Naive thymus-derived CD4-positive, alpha-beta T cell (primary cell): ENCODE measurements at regions of chr1 and their contacts with region 1.

Region 1: DNA sequence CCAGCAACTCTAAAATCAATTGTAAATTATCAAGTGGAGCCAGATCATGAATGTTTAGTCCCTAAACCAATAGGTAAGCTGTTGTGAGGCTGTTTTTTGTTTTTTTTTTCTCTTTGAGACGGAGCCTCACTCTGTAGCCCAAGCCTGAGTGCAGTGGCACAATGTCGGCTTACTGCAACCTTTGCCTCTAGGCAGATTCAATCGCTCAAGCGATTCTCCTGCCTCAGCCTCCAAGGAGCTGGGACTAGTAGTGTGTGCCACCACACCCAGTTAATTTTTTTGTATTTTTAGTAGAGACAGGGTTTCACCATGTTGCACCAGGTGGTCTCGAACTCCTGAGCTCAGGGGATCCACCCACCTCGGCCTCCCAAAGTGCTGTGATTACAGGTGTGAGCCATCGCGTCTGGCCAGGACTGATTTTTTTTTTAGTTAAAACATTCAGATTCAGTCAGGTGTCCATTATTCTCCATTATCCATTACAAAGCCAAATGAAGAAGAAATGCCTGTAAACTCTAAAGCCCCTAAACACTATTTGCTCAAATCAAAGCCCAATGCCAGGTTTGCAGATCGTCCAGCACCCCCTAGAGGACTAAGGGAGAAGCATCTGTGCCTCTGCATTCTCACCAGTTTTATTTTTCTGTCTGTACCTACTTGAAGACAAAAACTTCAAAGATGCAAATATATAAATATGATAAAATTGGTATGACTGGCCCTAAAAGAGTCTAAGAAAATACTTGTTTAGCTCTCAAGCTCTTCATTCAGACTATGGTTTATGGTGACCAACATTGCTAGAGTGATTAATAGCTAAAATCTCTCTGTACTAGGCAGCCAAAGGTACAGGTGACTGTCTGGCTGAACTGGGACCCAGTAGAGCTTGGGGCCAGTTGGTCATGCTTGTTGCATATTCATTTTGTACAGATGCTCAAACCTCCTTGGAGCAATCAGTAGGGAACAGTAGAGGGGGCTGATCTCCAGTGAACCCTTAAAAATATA is 138.6 kb downstream of the SYT2 start:
- DNase-seq: peak in 5 of 9 donors; percentile 3 to 12 (median 5)
- ATAC-seq: no peak
- H3K4me3 ChIP-seq: no peak overlapping the region
- H3K4me3 Mint-ChIP-seq: no peak overlapping the region
- H3K27ac ChIP-seq: no peak overlapping the region
- H3K27ac Mint-ChIP-seq: no peak overlapping the region
- H3K4me1 ChIP-seq: no peaks in the 10 kb centered on the region
- H3K4me1 Mint-ChIP-seq: peaks cover 0 to 6% (median 0%) of the 10 kb centered on the region in 7 donors
- H3K27me3 ChIP-seq: no peaks in the 10 kb centered on the region
- H3K27me3 Mint-ChIP-seq: no peaks in the 10 kb centered on the region

Region 2: DNA sequence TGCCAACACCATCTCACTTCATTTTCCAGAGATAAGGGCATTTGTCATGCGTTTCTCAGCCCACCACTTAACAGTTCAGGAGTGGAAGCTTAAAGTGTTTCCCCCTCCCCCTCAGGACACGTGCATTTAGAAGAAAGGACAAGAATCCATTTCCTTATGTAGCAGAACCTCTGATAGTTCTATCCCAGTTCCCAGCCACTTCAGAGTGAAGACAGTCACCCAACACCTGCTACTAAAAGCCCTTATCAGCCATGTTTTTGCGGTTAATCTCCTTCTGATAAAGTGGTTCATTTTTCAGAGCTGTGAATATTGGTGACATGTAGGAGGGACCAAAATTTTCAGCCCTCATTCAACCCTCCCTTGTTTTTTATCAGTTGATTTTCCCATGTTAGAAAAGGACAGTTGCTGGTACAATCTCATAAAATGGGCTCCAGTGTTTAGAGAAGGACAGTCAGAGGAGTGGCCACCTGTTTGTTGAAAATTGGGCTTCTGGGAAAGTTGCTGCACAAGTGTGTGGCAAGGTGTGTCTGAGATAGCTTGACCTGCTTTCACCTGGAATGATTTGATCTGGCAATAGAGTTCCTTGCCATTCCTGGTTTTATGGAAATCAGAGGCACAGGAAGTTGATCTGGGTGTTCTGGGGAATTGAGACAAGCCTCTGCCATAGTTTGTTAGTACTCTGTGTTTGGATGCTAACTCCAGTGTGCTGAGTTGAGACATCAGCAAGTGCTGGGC is 109.1 kb before region 1 on chr1:
- CTCF ChIA-PET with region 1: no interaction called
- POLR2A ChIA-PET with region 1: no interaction called
- intact Hi-C with region 1: loop called in 1 of 2 experiments (anchors 1 kb)
- DNase-seq: no peak
- ATAC-seq: no peak
- H3K4me3 ChIP-seq: no peak overlapping the region
- H3K4me3 Mint-ChIP-seq: no peak overlapping the region
- H3K27ac ChIP-seq: no peak overlapping the region
- H3K27ac Mint-ChIP-seq: peak overlapping the region in 1 of 9 donors; percentile 53
- H3K4me1 ChIP-seq: no peaks in the 10 kb centered on the region
- H3K4me1 Mint-ChIP-seq: peaks cover 0 to 4% (median 0%) of the 10 kb centered on the region in 7 donors
- H3K27me3 ChIP-seq: no peaks in the 10 kb centered on the region
- H3K27me3 Mint-ChIP-seq: no peaks in the 10 kb centered on the region

Region 3: DNA sequence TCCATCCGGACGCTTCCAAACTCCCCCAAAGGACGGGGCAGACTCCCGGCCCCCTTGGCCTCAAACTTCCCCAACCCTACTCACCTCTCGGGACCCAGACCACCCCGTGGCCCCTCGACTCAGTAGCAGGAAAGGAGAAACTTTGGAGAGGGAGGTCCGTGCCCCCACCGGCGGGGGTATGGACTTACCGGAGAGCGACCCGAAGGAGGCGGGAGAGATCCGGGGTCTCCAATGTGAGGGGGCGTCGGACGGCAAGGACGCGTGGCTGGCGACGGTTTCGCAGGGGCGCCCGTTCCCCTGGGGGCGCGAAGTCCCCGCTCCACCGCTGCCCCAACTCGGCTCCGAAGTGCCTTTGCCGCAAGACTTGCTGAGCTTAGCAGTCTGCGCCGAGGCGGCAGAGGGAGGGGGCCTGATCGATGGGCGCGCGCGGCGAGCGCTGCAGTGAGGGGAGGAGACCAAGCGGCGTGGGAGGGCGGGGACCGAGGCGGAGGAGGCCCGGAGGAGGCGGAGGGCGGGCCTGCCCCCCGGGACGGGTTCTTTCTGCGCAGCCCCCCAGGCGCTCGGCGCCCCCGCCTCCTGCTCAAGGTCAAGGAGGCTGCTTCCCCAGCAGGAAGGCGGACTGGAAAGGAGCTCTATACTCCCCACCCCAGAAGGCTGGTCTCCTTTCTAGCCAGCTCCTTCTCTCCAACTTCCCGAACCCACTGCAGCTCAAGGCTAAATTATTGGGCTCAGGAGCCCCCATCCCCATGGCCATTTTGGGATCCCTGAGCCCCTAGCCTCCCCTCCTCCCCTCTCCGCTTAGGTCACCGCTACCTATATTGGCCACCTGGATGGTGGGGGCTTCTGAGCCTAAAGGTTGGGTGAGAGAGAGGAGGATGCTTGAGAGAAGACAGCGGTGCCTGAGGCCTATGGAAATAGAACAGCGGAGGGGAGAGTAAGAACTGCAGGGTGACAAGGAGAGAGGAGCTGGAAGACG is 138.7 kb after region 1 on chr1 and contains the start of gene SYT2:
- CTCF ChIA-PET with region 1: no interaction called
- POLR2A ChIA-PET with region 1: no interaction called
- intact Hi-C with region 1: no loop called
- DNase-seq: no peak
- ATAC-seq: no peak
- H3K4me3 ChIP-seq: no peak within 1 kb of the TSS
- H3K4me3 Mint-ChIP-seq: peak within 1 kb of the TSS in 7 of 10 donors; percentile 29 to 70 (median 36)
- H3K27ac ChIP-seq: no peak within 1 kb of the TSS
- H3K27ac Mint-ChIP-seq: no peak within 1 kb of the TSS
- H3K4me1 ChIP-seq: no peaks in the 10 kb centered on the region
- H3K4me1 Mint-ChIP-seq: peaks cover 0 to 12% (median 5%) of the 10 kb centered on the region in 7 donors
- H3K27me3 ChIP-seq: peaks cover 2 to 3% of the 10 kb centered on the region in 2 donors
- H3K27me3 Mint-ChIP-seq: peaks cover 61 to 87% (median 68%) of the 10 kb centered on the region in 5 donors
- total RNA-seq, gene SYT2: not detected